MCF 10A (cell line): ENCODE measurements at regions of chr18 and their contacts with region 1.

Region 1: DNA sequence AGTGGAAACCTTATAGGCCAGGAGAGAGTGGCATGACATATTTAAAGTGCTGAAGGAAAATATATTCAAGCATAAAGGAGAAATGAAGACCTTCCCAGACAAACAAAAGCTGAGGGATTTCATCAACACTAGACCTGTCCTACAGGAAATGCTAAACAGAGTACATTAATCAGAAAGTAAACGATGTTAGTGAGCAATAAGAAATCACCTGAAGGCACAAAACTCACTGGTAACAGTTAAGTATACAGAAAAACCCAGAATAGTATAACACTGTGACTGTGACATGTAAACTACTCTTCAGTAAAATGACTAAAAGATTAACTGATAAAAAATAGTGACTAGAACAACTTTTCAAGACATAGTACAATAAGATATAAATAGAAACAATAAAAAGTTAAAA is 87.4 kb downstream of the ATP8B1 start:
- DNase-seq: no peak
- H3K4me3 Mint-ChIP-seq: no peak overlapping the region
- H3K27ac Mint-ChIP-seq: no peak overlapping the region
- H3K4me1 Mint-ChIP-seq: peaks cover 18% of the 10 kb centered on the region
- H3K27me3 Mint-ChIP-seq: no peaks in the 10 kb centered on the region
- CTCF ChIP-seq: no peak

Region 2: DNA sequence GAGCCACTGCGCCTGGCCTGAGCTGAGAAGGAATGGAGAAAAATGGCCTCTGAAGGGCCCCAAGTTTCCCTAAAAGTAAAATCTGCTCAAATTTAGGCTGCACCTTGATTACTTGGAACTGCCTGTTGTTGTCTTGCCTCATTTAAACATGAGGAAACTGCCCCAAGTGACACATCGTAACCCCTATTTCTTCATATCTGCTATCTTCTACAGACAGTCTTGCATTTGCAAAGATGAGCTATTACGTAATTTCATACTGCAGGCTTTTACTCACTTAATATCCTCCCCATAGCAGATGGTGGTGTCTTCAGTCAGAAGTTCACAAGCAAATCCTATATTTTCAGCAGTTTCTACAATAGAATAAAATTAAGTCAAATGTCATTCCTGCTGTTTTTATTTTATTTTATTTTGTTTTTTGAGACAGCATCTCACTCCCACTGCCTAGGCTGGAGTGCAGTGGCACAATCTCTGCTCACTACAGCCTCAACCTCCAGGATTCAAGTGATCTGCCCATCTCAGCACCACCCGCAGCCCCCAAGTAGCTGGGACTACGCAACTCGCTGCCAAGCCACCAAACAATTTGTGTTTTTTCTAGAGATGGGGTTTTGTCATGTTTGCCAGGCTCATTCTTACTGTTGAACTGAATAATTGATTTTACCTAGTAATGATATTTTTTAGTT is 48.7 kb before region 1 on chr18:
- CTCF ChIA-PET with region 1: no interaction called
- POLR2A ChIA-PET with region 1: interaction called, 15 read pairs
- intact Hi-C with region 1: no loop called
- DNase-seq: peak; percentile 69
- H3K4me3 Mint-ChIP-seq: no peak overlapping the region
- H3K27ac Mint-ChIP-seq: peak overlapping the region; percentile 54
- H3K4me1 Mint-ChIP-seq: no peaks in the 10 kb centered on the region
- H3K27me3 Mint-ChIP-seq: no peaks in the 10 kb centered on the region
- CTCF ChIP-seq: no peak

Region 3: GRCh38 chr18:57846258-57846657 is 130.6 kb after region 1 on chr18:
- CTCF ChIA-PET with region 1: interaction called, 4 read pairs
- POLR2A ChIA-PET with region 1: no interaction called
- intact Hi-C with region 1: loop called (anchors 10 kb)
- DNase-seq: peak; percentile 16
- H3K4me3 Mint-ChIP-seq: no peak overlapping the region
- H3K27ac Mint-ChIP-seq: peak overlapping the region; percentile 57
- H3K4me1 Mint-ChIP-seq: peaks cover 8% of the 10 kb centered on the region
- H3K27me3 Mint-ChIP-seq: no peaks in the 10 kb centered on the region
- CTCF ChIP-seq: no peak

Region 4: DNA sequence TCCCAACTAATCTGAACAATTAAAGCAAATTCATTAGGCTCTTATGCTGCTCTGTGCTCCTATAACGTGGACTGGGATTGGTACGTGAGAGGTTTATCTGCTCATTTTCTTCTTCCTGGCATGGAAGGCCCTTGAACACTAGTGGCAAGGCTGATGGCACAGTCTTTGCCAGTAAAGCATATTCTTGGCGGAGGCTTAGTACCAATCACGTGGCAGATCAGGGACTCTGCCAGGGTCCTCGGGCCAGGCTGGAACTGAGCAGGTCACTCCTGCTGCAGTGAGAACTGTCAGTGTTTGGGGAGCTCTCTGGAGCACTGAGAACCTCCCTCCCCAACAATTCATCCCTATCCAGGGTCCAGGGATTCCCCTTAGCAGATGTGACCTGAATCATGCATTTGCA is 916.9 kb after region 1 on chr18:
- CTCF ChIA-PET with region 1: no interaction called
- POLR2A ChIA-PET with region 1: no interaction called
- intact Hi-C with region 1: no loop called
- DNase-seq: no peak
- H3K4me3 Mint-ChIP-seq: no peak overlapping the region
- H3K27ac Mint-ChIP-seq: no peak overlapping the region
- H3K4me1 Mint-ChIP-seq: peaks cover 10% of the 10 kb centered on the region
- H3K27me3 Mint-ChIP-seq: no peaks in the 10 kb centered on the region
- CTCF ChIP-seq: no peak